Endothelial cell of umbilical vein (primary cell): ENCODE measurements at regions of chr6 and their contacts with region 1.

Region 1: GRCh38 chr6:108558372-108559096 is 2.2 kb upstream of the FOXO3 start:
- DNase-seq: peak; percentile 99
- H3K4me3 ChIP-seq: peak overlapping the region; percentile 89 to 94 (median 92)
- H3K27ac ChIP-seq: peak overlapping the region; percentile 93
- H3K4me1 ChIP-seq: peaks cover 22% of the 10 kb centered on the region
- H3K27me3 ChIP-seq: peaks cover 3 to 4% of the 10 kb centered on the region in 2 experiments
- CTCF ChIP-seq: no peak
- POLR2A ChIP-seq: no peak

Region 2: DNA sequence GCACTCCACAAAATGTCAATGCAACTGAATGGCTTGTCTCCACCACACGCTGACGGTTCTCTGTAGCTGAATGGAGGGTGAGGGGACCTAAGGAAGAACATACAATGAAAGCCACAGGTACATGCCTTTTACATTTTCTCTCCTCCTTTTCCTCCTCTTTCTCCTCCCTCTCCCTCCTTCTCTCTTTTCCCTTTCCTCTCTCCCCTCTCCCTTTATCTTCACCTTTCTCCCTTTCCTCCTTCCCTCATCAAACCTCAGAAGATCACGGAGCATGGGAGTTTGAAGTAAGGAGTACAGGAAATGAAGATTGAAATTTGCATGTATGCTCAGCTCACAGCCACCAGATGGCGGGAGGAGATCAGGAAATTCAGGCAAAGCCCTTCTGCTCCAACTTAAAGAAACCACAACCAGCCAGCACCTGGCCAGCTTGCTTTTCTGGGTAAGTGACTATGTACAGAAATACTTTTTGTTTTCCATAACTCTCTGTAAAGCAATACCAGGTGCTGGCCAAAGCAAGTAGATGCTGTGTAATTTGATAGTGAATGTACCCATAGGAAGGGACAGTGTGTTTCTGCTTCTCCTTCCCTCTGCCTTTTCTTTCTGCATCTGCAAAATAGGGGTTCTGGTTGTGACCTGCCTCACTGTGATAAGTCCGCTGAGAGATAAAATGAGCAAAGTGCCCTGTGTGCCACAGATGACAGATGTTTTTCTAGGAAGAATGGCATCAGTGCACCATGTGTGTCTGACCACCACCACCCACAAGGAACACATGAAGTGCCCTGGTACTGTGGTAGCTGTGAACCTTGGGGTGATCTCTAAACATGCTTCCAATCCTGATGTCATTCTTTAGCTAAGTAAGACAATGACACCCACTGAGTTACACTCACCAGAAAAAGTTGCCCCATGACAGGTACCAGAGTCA is 16.4 kb before region 1 on chr6:
- CTCF ChIA-PET with region 1: interaction called, 38 read pairs
- POLR2A ChIA-PET with region 1: no interaction called
- dilution Hi-C with region 1: no loop called
- intact Hi-C with region 1: loop called (anchors 1 kb)
- DNase-seq: peak; percentile 83
- H3K4me3 ChIP-seq: no peak overlapping the region
- H3K27ac ChIP-seq: no peak overlapping the region
- H3K4me1 ChIP-seq: no peaks in the 10 kb centered on the region
- H3K27me3 ChIP-seq: peaks cover 0 to 8% of the 10 kb centered on the region in 2 experiments
- CTCF ChIP-seq: peak; percentile 71 to 80
- POLR2A ChIP-seq: no peak

Region 3: GRCh38 chr6:108737594-108738546 is 179.3 kb after region 1 on chr6:
- CTCF ChIA-PET with region 1: no interaction called
- POLR2A ChIA-PET with region 1: interaction called, 3 read pairs
- dilution Hi-C with region 1: no loop called
- intact Hi-C with region 1: loop called (anchors 1 kb)
- DNase-seq: peak; percentile 82
- H3K4me3 ChIP-seq: no peak overlapping the region
- H3K27ac ChIP-seq: peak overlapping the region; percentile 62
- H3K4me1 ChIP-seq: peaks cover 40% of the 10 kb centered on the region
- H3K27me3 ChIP-seq: no peaks in the 10 kb centered on the region
- CTCF ChIP-seq: no peak
- POLR2A ChIP-seq: no peak

Region 4: DNA sequence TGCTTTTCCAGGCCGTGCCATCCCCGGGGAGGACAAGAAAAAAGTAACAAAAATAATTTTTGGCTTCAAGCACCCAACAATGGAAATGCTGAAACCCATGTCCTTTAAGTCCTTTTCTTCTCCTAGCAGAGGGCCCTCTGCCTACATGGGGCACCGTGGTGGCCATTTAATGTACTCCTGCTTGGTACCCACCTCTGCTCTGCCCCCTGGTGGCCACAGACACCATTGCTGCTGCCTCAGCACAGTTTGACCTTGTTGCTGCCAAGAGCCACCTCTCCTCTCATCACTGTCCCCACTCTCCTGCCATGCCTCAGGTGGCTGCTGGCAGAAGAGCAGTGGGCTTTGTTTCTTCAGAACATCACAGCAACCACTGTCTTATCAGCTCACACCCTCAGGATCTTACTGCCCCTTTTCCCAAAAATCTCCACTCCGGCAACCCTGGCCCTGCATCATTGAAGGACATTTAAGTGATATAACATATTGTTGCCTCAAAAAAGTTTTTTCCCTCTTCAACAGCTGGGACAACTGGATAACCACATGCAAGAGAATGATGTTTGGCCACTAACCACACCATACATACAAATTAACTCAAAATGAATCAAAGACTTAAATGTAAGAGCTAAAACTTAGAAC is 276.8 kb after region 1 on chr6:
- CTCF ChIA-PET with region 1: interaction called, 8 read pairs
- POLR2A ChIA-PET with region 1: no interaction called
- dilution Hi-C with region 1: no loop called
- intact Hi-C with region 1: loop called (anchors 1 kb)
- DNase-seq: peak; percentile 82
- H3K4me3 ChIP-seq: no peak overlapping the region
- H3K27ac ChIP-seq: no peak overlapping the region
- H3K4me1 ChIP-seq: no peaks in the 10 kb centered on the region
- H3K27me3 ChIP-seq: peaks cover 0 to 10% of the 10 kb centered on the region in 2 experiments
- CTCF ChIP-seq: peak; percentile 80 to 95
- POLR2A ChIP-seq: no peak

Region 5: DNA sequence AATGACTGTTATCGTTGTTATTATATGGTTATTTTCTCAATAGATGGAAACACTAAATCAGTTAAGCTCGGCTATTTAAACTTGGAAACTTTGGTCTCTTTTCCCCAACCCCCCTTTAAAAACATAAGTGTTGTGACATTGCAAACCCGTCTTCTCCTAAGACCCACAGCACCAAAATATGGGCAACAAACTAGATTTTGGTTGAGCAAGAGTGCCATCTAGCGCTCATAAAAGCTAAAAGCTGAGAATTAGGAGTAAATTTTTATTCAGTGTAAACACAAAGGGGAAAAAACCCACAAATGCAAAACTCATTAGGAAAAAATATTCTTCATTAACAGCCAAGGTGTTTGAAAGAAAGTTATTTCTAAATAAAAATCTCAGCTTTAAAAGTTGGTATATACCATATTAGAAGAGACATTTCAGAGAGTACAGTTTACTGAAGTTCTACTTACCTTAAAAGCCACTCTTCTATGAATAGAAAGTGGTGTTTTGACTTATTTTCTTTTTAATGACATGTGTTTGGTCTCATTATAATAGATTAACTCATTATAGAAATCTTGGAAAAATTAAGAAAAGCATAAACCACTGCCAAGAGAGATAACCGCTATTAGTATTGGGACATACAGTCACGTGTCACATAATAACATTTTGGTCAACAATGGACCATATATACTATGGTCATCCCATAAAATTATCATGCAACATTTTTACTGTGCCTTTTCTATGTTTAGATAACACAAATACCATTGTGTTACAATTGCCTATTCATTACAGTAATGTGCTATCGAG is 515.0 kb after region 1 on chr6:
- CTCF ChIA-PET with region 1: interaction called, 11 read pairs
- POLR2A ChIA-PET with region 1: no interaction called
- dilution Hi-C with region 1: no loop called
- intact Hi-C with region 1: loop called (anchors 5 kb)
- DNase-seq: peak; percentile 77
- H3K4me3 ChIP-seq: no peak overlapping the region
- H3K27ac ChIP-seq: no peak overlapping the region
- H3K4me1 ChIP-seq: peaks cover 5% of the 10 kb centered on the region
- H3K27me3 ChIP-seq: no peaks in the 10 kb centered on the region
- CTCF ChIP-seq: peak; percentile 32 to 55
- POLR2A ChIP-seq: no peak

Region 6: DNA sequence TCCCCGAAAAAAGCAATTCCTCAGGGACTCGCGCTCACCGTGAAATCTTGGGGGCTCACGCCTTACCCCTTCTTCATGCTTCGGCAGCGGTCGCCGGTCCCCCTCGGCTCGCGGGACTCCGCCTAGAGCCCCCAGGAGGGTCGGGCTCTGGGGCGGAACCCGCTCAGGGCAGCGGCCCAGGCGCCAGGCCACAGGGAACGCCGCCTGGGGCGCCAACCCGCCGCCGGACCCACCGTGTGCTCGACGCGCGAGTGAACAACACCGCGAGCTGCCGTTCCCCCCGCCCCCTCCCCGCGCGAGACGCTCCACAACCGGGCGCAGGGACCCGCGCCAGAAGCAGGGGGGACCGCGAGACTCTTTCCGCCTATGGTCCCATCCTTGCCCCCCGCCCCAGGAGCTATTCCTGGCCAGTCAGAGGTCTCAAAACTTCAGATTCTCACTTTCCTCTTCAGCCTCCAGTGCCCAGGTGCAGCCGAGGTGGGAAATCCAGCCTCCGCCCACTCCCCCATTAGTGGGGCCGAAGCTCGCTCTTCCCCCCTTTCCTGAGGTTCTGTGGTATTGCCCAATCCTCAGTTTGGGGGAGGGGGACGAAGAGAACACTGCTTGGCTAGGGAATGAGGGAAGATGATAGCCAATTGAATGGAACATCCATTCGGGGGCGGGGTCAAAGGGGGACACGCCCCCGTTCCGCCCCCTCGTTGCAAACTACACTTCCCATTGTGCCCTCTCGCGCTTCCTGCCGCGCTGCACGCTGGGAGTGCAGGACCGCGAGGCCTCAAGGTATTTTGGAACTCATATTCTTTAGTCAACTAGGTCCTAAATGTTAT is 1621.1 kb after region 1 on chr6 and contains the start of gene WASF1:
- CTCF ChIA-PET with region 1: no interaction called
- POLR2A ChIA-PET with region 1: no interaction called
- dilution Hi-C with region 1: no loop called
- intact Hi-C with region 1: loop called (anchors 10 kb)
- DNase-seq: peak; percentile 99
- H3K4me3 ChIP-seq: peak within 1 kb of the TSS; percentile 61 to 94 (median 92)
- H3K27ac ChIP-seq: peak within 1 kb of the TSS; percentile 87
- H3K4me1 ChIP-seq: peaks cover 30% of the 10 kb centered on the region
- H3K27me3 ChIP-seq: no peaks in the 10 kb centered on the region
- CTCF ChIP-seq: no peak
- POLR2A ChIP-seq: peak; percentile 63
- total RNA-seq, gene WASF1: 20.9 and 23.2 TPM in 2 replicates